Gastrocnemius medialis (tissue), 4 donors: ENCODE measurements at regions of chr3 and their contacts with region 1.

Region 1: DNA sequence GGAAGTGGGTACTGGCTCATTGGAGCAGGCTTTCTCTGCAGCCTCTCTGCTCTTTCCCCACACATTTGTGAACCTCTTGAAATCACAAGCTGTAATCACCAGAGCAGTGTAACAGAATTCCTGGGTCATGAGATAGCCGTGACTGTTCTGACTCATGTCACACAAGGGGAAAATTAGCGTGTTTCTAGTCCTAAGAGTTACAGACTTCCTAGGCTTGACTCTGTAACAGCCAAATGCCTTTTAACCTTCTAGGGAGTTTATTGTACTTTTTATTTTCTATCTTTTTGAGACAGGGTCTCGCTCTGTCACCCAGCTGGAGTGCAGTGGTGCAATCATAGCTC is 54.7 kb upstream of the TRAK1 start:
- DNase-seq: peak; percentile 83 to 84
- ATAC-seq: peak; percentile 94 to 97
- H3K4me3 ChIP-seq: no peak overlapping the region
- H3K27ac ChIP-seq: peak overlapping the region; percentile 88 to 94 (median 91)
- H3K4me1 ChIP-seq: peaks cover 78 to 80% of the 10 kb centered on the region in 2 donors
- H3K27me3 ChIP-seq: no peaks in the 10 kb centered on the region
- CTCF ChIP-seq: no peak
- POLR2A ChIP-seq: peak; percentile 67 to 90

Region 2: GRCh38 chr3:41943311-41943843 is 93.1 kb before region 1 on chr3:
- in situ Hi-C with region 1: no loop called
- intact Hi-C with region 1: no loop called
- DNase-seq: no peak
- ATAC-seq: no peak
- H3K4me3 ChIP-seq: no peak overlapping the region
- H3K27ac ChIP-seq: no peak overlapping the region
- H3K4me1 ChIP-seq: no peaks in the 10 kb centered on the region
- H3K27me3 ChIP-seq: no peaks in the 10 kb centered on the region
- CTCF ChIP-seq: no peak
- POLR2A ChIP-seq: no peak

Region 3: GRCh38 chr3:42061713-42062408 is 25.4 kb after region 1 on chr3:
- in situ Hi-C with region 1: no loop called
- intact Hi-C with region 1: loop called (anchors 2 kb)
- DNase-seq: peak; percentile 88 to 94
- ATAC-seq: peak; percentile 92 to 93
- H3K4me3 ChIP-seq: peak overlapping the region in 3 of 4 donors; percentile 17 to 41 (median 23)
- H3K27ac ChIP-seq: peak overlapping the region; percentile 88 to 94 (median 90)
- H3K4me1 ChIP-seq: peaks cover 84 to 85% of the 10 kb centered on the region in 2 donors
- H3K27me3 ChIP-seq: no peaks in the 10 kb centered on the region
- CTCF ChIP-seq: no peak
- POLR2A ChIP-seq: peak; percentile 27 to 61

Region 4: GRCh38 chr3:42590989-42591756 is 554.7 kb after region 1 on chr3:
- in situ Hi-C with region 1: no loop called
- intact Hi-C with region 1: no loop called
- DNase-seq: no peak
- ATAC-seq: peak; percentile 4 to 5
- H3K4me3 ChIP-seq: peak overlapping the region; percentile 68 to 92 (median 76)
- H3K27ac ChIP-seq: peak overlapping the region; percentile 85 to 92 (median 87)
- H3K4me1 ChIP-seq: peaks cover 11 to 16% of the 10 kb centered on the region in 2 donors
- H3K27me3 ChIP-seq: no peaks in the 10 kb centered on the region
- CTCF ChIP-seq: no peak
- POLR2A ChIP-seq: no peak